ENCODE measurements at regions of chr15 and their contacts with region 1.

Region 1: DNA sequence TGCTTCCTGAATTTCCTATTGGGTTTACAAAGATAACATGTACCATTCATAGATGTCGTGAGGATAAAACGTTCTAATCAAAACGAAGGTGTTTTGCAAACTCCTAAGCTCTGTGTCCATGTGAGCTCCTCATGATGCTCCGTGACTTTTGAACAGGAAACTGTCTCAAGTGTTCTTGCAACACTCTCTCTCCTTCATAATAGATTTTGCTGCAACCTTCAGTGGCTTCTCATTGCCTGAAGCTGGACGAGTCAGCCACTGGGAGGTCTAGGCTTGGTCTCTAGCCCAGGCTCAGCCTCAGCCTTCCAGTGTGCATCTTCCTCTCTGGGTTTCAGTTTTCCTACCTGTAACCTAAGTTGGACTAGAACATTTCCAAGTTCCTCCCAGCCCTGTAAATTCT is 18.7 kb upstream of the BCL2A1 start:
- DNase-seq: no peak
- H3K4me3 ChIP-seq: no peak overlapping the region
- H3K4me3 Mint-ChIP-seq: no peak overlapping the region
- H3K27ac ChIP-seq: no peak overlapping the region
- H3K27ac Mint-ChIP-seq: peak overlapping the region in 1 of 7 donors; percentile 45
- H3K4me1 ChIP-seq: no peaks in the 10 kb centered on the region
- H3K4me1 Mint-ChIP-seq: peaks cover 0 to 5% (median 3%) of the 10 kb centered on the region in 4 donors
- H3K27me3 ChIP-seq: no peaks in the 10 kb centered on the region
- H3K27me3 Mint-ChIP-seq: no peaks in the 10 kb centered on the region

Region 2: DNA sequence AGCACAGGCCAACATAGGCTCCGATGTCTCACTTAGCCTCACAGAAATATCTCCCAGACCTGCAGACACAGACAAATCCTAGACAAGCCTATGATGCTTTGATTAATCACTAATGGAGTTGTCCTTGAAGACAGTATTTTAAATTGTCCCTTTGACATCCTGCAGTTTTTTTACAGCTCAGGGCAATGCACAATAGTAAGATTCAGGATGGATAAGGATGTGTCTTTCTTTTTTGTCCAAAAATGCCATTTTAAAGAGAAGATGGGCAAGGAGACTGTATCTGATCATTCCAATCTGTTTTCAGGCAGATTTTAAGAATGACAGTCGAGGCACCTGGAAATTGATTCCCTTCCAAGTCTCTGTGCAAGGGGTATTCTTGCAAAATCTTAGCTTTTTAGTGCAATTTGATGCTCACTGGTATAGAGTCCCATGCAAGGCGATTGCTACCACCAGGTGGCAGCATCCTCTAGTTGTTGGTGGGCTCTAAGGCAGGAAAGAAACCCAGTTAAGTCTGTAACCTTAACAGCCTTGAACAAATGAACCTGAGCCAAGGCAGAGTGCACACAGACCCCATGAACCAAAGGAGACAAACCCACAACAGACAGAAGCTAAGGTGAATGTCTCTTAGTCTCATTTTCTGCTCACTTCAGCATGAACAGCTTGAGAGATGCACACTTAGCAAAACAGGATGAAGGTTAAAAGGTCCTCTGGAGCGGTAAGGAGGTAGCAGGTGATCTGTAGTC is 608.8 kb before region 1 on chr15:
- CTCF ChIA-PET with region 1: interaction called, 67 read pairs
- POLR2A ChIA-PET with region 1: no interaction called
- intact Hi-C with region 1: no loop called
- DNase-seq: peak; percentile 47 to 65 (median 59)
- H3K4me3 ChIP-seq: no peak overlapping the region
- H3K4me3 Mint-ChIP-seq: no peak overlapping the region
- H3K27ac ChIP-seq: no peak overlapping the region
- H3K27ac Mint-ChIP-seq: no peak overlapping the region
- H3K4me1 ChIP-seq: no peaks in the 10 kb centered on the region
- H3K4me1 Mint-ChIP-seq: peaks cover 0 to 4% (median 2%) of the 10 kb centered on the region in 4 donors
- H3K27me3 ChIP-seq: no peaks in the 10 kb centered on the region
- H3K27me3 Mint-ChIP-seq: no peaks in the 10 kb centered on the region

Region 3: GRCh38 chr15:79872358-79873017 is 117.2 kb before region 1 on chr15:
- CTCF ChIA-PET with region 1: no interaction called
- POLR2A ChIA-PET with region 1: no interaction called
- intact Hi-C with region 1: no loop called
- DNase-seq: peak; percentile 37 to 87 (median 55)
- H3K4me3 ChIP-seq: no peak overlapping the region
- H3K4me3 Mint-ChIP-seq: peak overlapping the region in 6 of 8 donors; percentile 17 to 72 (median 44)
- H3K27ac ChIP-seq: no peak overlapping the region
- H3K27ac Mint-ChIP-seq: peak overlapping the region; percentile 65 to 89 (median 81)
- H3K4me1 ChIP-seq: peaks cover 11% of the 10 kb centered on the region
- H3K4me1 Mint-ChIP-seq: peaks cover 18 to 24% (median 20%) of the 10 kb centered on the region in 4 donors
- H3K27me3 ChIP-seq: no peaks in the 10 kb centered on the region
- H3K27me3 Mint-ChIP-seq: no peaks in the 10 kb centered on the region

Region 4: GRCh38 chr15:79896637-79897379 is 92.9 kb before region 1 on chr15 and contains the start of gene MTHFS:
- CTCF ChIA-PET with region 1: interaction called, 42 read pairs
- POLR2A ChIA-PET with region 1: interaction called, 4 read pairs
- intact Hi-C with region 1: loop called (anchors 1 kb)
- DNase-seq: peak; percentile 81 to 87 (median 85)
- H3K4me3 ChIP-seq: peak within 1 kb of the TSS; percentile 74 to 84
- H3K4me3 Mint-ChIP-seq: peak within 1 kb of the TSS; percentile 96 to 100 (median 100)
- H3K27ac ChIP-seq: peak within 1 kb of the TSS; percentile 88
- H3K27ac Mint-ChIP-seq: peak within 1 kb of the TSS; percentile 97 to 100 (median 99)
- H3K4me1 ChIP-seq: peaks cover 32% of the 10 kb centered on the region
- H3K4me1 Mint-ChIP-seq: peaks cover 28 to 45% (median 36%) of the 10 kb centered on the region in 4 donors
- H3K27me3 ChIP-seq: no peaks in the 10 kb centered on the region
- H3K27me3 Mint-ChIP-seq: no peaks in the 10 kb centered on the region
- total RNA-seq, gene MTHFS: 21.3 to 25.6 TPM

Region 5: DNA sequence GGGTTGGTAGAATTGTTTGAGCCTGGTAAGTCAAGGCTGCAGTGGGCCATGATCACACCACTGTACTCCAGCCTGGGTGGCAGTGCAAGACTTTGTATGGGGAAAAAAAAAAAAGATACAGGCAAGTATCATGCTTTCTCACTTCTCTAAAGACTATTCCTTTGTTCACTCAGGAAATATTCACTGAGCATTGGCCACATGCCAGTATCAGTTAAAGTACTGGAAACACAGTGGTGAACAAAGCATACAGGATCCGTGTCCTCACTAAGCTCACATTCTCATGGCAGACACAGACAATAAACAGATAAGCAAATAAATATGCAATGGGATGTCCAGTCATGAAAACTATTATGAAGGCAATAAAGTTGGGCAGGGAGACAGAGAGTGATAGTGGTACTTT is 87.7 kb before region 1 on chr15:
- CTCF ChIA-PET with region 1: interaction called, 42 read pairs
- POLR2A ChIA-PET with region 1: no interaction called
- intact Hi-C with region 1: loop called (anchors 1 kb)
- DNase-seq: no peak
- H3K4me3 ChIP-seq: no peak overlapping the region
- H3K4me3 Mint-ChIP-seq: no peak overlapping the region
- H3K27ac ChIP-seq: no peak overlapping the region
- H3K27ac Mint-ChIP-seq: peak overlapping the region in 1 of 7 donors; percentile 15
- H3K4me1 ChIP-seq: peaks cover 10% of the 10 kb centered on the region
- H3K4me1 Mint-ChIP-seq: peaks cover 9 to 15% (median 13%) of the 10 kb centered on the region in 4 donors
- H3K27me3 ChIP-seq: no peaks in the 10 kb centered on the region
- H3K27me3 Mint-ChIP-seq: no peaks in the 10 kb centered on the region

Region 6: GRCh38 chr15:79923515-79924395 is 65.9 kb before region 1 on chr15:
- CTCF ChIA-PET with region 1: interaction called, 17 read pairs
- POLR2A ChIA-PET with region 1: interaction called, 7 read pairs
- intact Hi-C with region 1: loop called (anchors 1 kb)
- DNase-seq: peak; percentile 97 to 100 (median 99)
- H3K4me3 ChIP-seq: peak overlapping the region; percentile 88 to 91
- H3K4me3 Mint-ChIP-seq: peak overlapping the region; percentile 90 to 94 (median 92)
- H3K27ac ChIP-seq: peak overlapping the region; percentile 85
- H3K27ac Mint-ChIP-seq: peak overlapping the region; percentile 95 to 99 (median 97)
- H3K4me1 ChIP-seq: peaks cover 20% of the 10 kb centered on the region
- H3K4me1 Mint-ChIP-seq: peaks cover 10 to 31% (median 22%) of the 10 kb centered on the region in 4 donors
- H3K27me3 ChIP-seq: no peaks in the 10 kb centered on the region
- H3K27me3 Mint-ChIP-seq: no peaks in the 10 kb centered on the region

Region 7: GRCh38 chr15:80173022-80173759 is 183.5 kb after region 1 on chr15:
- CTCF ChIA-PET with region 1: interaction called, 7 read pairs
- POLR2A ChIA-PET with region 1: no interaction called
- intact Hi-C with region 1: loop called (anchors 1 kb)
- DNase-seq: peak; percentile 55 to 60 (median 59)
- H3K4me3 ChIP-seq: no peak overlapping the region
- H3K4me3 Mint-ChIP-seq: peak overlapping the region in 1 of 8 donors; percentile 15
- H3K27ac ChIP-seq: no peak overlapping the region
- H3K27ac Mint-ChIP-seq: no peak overlapping the region
- H3K4me1 ChIP-seq: no peaks in the 10 kb centered on the region
- H3K4me1 Mint-ChIP-seq: no peaks in the 10 kb centered on the region
- H3K27me3 ChIP-seq: no peaks in the 10 kb centered on the region
- H3K27me3 Mint-ChIP-seq: no peaks in the 10 kb centered on the region